Panc1 (cell line): ENCODE measurements at regions of chr2 and their contacts with region 1.

Region 1: GRCh38 chr2:217713395-217714286 is 289.2 kb downstream of the TNS1 start:
- DNase-seq: peak; percentile 54
- ATAC-seq: peak; percentile 86
- H3K4me3 ChIP-seq: no peak overlapping the region
- H3K27ac ChIP-seq: no peak overlapping the region
- H3K4me1 ChIP-seq: no peaks in the 10 kb centered on the region
- H3K27me3 ChIP-seq: peaks cover 3% of the 10 kb centered on the region; the same call in 1 of the 2 replicates
- CTCF ChIP-seq: peak; percentile 97

Region 2: DNA sequence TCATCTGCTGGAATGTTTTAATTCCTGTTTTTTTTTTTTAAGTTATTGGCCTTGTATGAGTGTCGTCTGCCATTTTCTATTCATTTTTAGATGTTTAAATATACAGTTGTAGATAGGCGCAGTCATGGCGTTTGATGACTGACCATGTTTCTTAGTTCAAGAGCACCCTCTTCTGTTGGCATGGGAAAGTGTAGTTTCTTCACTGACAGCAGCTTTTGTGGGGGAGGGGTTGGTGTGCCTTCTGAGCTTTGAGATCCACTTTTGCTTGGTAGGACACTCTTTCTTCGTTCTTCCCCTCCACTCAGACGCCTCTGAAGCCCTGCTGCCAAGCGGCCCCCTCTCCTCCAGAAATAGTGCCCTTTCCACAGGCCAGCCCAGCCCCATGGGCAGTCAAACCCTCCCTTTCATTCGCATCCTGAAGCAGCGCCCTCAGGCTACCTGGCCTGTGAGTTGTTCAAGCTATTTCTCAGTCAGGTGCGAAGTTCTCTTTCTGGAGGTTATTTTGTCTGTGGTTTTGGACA is 202.8 kb before region 1 on chr2:
- CTCF ChIA-PET with region 1: no interaction called
- POLR2A ChIA-PET with region 1: no interaction called
- in situ Hi-C with region 1: no loop called
- intact Hi-C with region 1: loop called (anchors 10 kb)
- DNase-seq: peak; percentile 17
- ATAC-seq: peak; percentile 73
- H3K4me3 ChIP-seq: no peak overlapping the region
- H3K27ac ChIP-seq: no peak overlapping the region
- H3K4me1 ChIP-seq: no peaks in the 10 kb centered on the region; the same call in 1 of the 2 replicates
- H3K27me3 ChIP-seq: no peaks in the 10 kb centered on the region
- CTCF ChIP-seq: peak; percentile 71

Region 3: GRCh38 chr2:217666338-217666737 is 47.3 kb before region 1 on chr2:
- CTCF ChIA-PET with region 1: no interaction called
- POLR2A ChIA-PET with region 1: no interaction called
- in situ Hi-C with region 1: no loop called
- intact Hi-C with region 1: no loop called
- DNase-seq: no peak
- ATAC-seq: no peak
- H3K4me3 ChIP-seq: no peak overlapping the region
- H3K27ac ChIP-seq: no peak overlapping the region
- H3K4me1 ChIP-seq: no peaks in the 10 kb centered on the region
- H3K27me3 ChIP-seq: no peaks in the 10 kb centered on the region
- CTCF ChIP-seq: no peak

Region 4: GRCh38 chr2:217953531-217953932 is 239.9 kb after region 1 on chr2:
- CTCF ChIA-PET with region 1: no interaction called
- POLR2A ChIA-PET with region 1: no interaction called
- in situ Hi-C with region 1: no loop called
- intact Hi-C with region 1: no loop called
- DNase-seq: no peak
- ATAC-seq: no peak
- H3K4me3 ChIP-seq: no peak overlapping the region
- H3K27ac ChIP-seq: no peak overlapping the region
- H3K4me1 ChIP-seq: no peaks in the 10 kb centered on the region
- H3K27me3 ChIP-seq: peaks cover 14% of the 10 kb centered on the region; the same call in 1 of the 2 replicates
- CTCF ChIP-seq: no peak